Ascending aorta (tissue), 2 donors: ENCODE measurements at regions of chr19 and their contacts with region 1.

Region 1: GRCh38 chr19:7919610-7920518 is at the start of gene SNAPC2:
- DNase-seq: peak; percentile 81 to 98
- H3K4me3 ChIP-seq: peak within 1 kb of the TSS; percentile 96 to 97
- H3K27ac ChIP-seq: peak within 1 kb of the TSS; percentile 90 to 93
- H3K4me1 ChIP-seq: peaks cover 37 to 39% of the 10 kb centered on the region in 2 donors
- H3K27me3 ChIP-seq: peaks cover 13% of the 10 kb centered on the region
- CTCF ChIP-seq: peak in 1 of 3 experiments; percentile 5
- total RNA-seq, gene SNAPC2: 30.5 TPM

Region 2: DNA sequence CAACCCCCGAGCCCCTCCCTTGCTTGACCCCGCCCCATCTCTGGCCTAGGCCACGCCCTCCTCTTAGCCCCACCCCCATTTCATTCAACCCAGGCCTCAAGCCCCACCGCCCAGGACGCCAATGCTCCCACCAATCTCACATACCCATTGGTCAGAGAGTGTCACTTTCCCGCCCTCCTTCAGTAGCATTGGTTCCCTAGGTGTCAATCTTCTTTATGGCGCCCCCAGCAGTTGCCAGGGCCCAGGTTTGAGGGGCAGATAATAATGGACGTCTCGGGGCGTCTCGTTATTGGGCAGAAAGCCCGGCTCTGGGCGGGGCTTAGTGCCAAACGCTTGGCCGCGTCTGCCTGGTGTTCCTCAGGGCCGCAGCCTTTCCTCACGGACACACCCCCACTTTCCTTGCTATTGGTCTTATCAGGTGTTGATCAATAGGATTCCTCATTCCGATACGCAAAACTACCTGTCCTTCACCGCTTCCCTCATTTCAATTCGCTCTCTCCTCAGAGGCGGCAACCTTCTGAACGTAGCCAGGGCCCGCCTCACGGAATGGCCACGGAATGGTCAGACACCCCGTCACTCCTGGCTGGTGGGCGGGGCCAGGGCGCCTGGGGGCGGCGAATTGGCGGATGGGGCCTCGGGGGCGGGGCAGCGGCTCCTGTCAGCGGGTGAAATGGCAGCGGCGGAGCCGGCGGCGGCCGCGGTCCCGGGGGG is 90.1 kb before region 1 on chr19 and contains the start of gene EVI5L:
- intact Hi-C with region 1: loop called (anchors 5 kb)
- DNase-seq: peak; percentile 99
- H3K4me3 ChIP-seq: peak within 1 kb of the TSS; percentile 69 to 98
- H3K27ac ChIP-seq: no peak within 1 kb of the TSS
- H3K4me1 ChIP-seq: peaks cover 3 to 9% of the 10 kb centered on the region in 2 donors
- H3K27me3 ChIP-seq: no peaks in the 10 kb centered on the region
- CTCF ChIP-seq: no peak
- total RNA-seq, gene EVI5L: 27.7 TPM

Region 3: DNA sequence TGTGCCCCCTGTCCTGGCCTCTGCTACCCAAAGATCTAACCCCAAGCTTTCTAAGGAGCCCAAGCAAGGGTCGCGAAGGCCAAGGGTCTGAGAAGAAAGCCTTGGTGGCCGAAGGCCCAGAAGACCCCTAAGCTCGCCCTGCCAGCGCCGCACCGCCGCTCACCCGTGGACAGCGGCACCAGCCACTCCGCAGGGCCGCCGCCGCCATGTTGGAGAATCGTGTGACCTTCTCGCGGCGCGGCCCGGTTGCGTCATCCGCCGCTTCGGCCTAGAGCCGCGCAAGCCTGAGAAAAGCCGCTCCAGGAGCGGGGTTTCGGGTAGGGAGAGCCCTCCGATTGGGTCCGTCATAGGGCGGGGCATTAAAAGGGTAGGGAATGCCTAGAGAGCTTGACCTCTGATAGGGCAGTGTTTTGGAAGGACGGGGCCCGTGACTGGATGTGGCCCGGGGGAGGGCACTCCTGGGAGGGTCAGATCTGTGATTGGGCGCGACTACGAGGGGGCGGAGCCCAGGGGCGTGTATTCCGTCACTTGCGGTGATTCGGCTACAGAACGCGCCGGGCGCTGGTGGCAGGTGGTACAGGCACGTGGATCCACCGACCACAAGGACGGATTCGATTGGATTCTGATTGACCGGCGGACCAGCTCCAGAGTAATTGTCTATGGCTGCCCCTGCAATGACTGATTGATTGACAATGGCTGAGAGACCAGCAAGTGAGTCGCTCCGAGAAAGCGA is 23.7 kb after region 1 on chr19 and contains the start of gene TIMM44:
- intact Hi-C with region 1: loop called (anchors 1 kb)
- DNase-seq: peak; percentile 98 to 100
- H3K4me3 ChIP-seq: peak within 1 kb of the TSS; percentile 58 to 81
- H3K27ac ChIP-seq: peak within 1 kb of the TSS; percentile 91 to 93
- H3K4me1 ChIP-seq: peaks cover 0 to 13% of the 10 kb centered on the region in 2 donors
- H3K27me3 ChIP-seq: no peaks in the 10 kb centered on the region
- CTCF ChIP-seq: no peak
- total RNA-seq, gene TIMM44: 151 TPM

Region 4: GRCh38 chr19:8389891-8390616 is 470.2 kb after region 1 on chr19 and contains the start of gene RAB11B:
- intact Hi-C with region 1: loop called (anchors 1 kb)
- DNase-seq: peak; percentile 100
- H3K4me3 ChIP-seq: peak within 1 kb of the TSS; percentile 97 to 100
- H3K27ac ChIP-seq: peak within 1 kb of the TSS; percentile 100
- H3K4me1 ChIP-seq: peaks cover 18 to 42% of the 10 kb centered on the region in 2 donors
- H3K27me3 ChIP-seq: no peaks in the 10 kb centered on the region
- CTCF ChIP-seq: no peak
- total RNA-seq, gene RAB11B: 70.8 TPM

Region 5: DNA sequence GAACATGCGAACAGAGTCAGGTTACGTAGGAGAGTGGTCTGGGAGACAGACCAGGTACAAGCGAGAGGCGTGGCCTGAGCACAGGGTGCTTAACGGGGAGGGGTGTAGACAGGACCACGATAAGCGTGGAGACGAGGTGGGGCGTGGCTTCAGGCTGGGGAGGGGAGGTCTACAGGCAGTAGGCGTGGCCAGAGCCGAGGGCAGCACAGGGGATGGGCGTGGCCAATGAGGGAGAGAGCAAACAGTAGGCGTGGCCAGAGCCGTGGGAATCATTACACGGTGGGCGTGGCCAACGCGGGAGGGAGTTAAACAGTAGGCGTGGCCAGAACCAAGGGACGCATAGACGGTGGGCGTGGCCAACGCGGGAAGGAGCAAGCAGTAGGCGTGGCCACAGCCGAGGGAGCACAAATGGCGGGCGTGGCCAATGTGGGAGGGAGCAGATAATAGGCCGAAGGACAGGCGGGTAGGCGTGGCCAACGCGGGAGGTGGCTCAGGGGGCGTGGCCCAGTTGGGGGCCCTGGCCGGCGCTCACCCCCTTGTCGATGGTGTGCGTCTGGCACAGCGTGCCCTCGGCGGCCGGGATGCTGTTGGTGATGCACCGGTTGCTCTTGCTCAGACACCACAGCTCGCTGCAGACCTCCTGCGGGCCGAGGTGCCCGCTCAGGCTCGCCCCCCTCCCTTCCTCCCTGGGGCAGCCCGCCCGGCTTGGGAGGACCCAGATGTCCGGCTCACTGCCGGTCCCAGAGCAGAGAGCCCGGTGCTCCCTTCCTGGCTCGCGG is 672.6 kb after region 1 on chr19:
- intact Hi-C with region 1: loop called (anchors 10 kb)
- DNase-seq: peak; percentile 95 to 99
- H3K4me3 ChIP-seq: peak overlapping the region; percentile 23 to 61
- H3K27ac ChIP-seq: peak overlapping the region; percentile 40 to 63
- H3K4me1 ChIP-seq: peaks cover 10 to 18% of the 10 kb centered on the region in 2 donors
- H3K27me3 ChIP-seq: no peaks in the 10 kb centered on the region
- CTCF ChIP-seq: no peak